MCF 10A (cell line): ENCODE measurements at regions of chr22 and their contacts with region 1.

Region 1: GRCh38 chr22:40856513-40857308 is at the starts of genes ST13 and XPNPEP3:
- DNase-seq: peak; percentile 96
- H3K4me3 Mint-ChIP-seq: peak within 1 kb of the TSS; percentile 97
- H3K27ac Mint-ChIP-seq: peak within 1 kb of the TSS; percentile 99
- H3K4me1 Mint-ChIP-seq: peaks cover 15% of the 10 kb centered on the region
- H3K27me3 Mint-ChIP-seq: no peaks in the 10 kb centered on the region
- CTCF ChIP-seq: no peak
- total RNA-seq, gene ST13: 191 and 231 TPM in 2 replicates
- total RNA-seq, gene XPNPEP3: 33.1 and 47.2 TPM in 2 replicates

Region 2: GRCh38 chr22:40818747-40819598 is 37.7 kb before region 1 on chr22 and contains the start of gene SLC25A17:
- CTCF ChIA-PET with region 1: interaction called, 5 read pairs
- POLR2A ChIA-PET with region 1: interaction called, 58 read pairs
- intact Hi-C with region 1: no loop called
- DNase-seq: peak; percentile 90
- H3K4me3 Mint-ChIP-seq: peak within 1 kb of the TSS; percentile 95
- H3K27ac Mint-ChIP-seq: peak within 1 kb of the TSS; percentile 94
- H3K4me1 Mint-ChIP-seq: peaks cover 16% of the 10 kb centered on the region
- H3K27me3 Mint-ChIP-seq: no peaks in the 10 kb centered on the region
- CTCF ChIP-seq: peak; percentile 25
- total RNA-seq, gene SLC25A17: 21.1 and 22.3 TPM in 2 replicates

Region 3: GRCh38 chr22:40867109-40867508 is 10.4 kb after region 1 on chr22:
- CTCF ChIA-PET with region 1: no interaction called
- POLR2A ChIA-PET with region 1: interaction called, 58 read pairs
- intact Hi-C with region 1: no loop called
- DNase-seq: no peak
- H3K4me3 Mint-ChIP-seq: no peak overlapping the region
- H3K27ac Mint-ChIP-seq: no peak overlapping the region
- H3K4me1 Mint-ChIP-seq: peaks cover 5% of the 10 kb centered on the region
- H3K27me3 Mint-ChIP-seq: no peaks in the 10 kb centered on the region
- CTCF ChIP-seq: no peak

Region 4: GRCh38 chr22:40889116-40889515 is 32.4 kb after region 1 on chr22:
- CTCF ChIA-PET with region 1: no interaction called
- POLR2A ChIA-PET with region 1: interaction called, 12 read pairs
- intact Hi-C with region 1: no loop called
- DNase-seq: peak; percentile 1
- H3K4me3 Mint-ChIP-seq: no peak overlapping the region
- H3K27ac Mint-ChIP-seq: peak overlapping the region; percentile 64
- H3K4me1 Mint-ChIP-seq: peaks cover 8% of the 10 kb centered on the region
- H3K27me3 Mint-ChIP-seq: no peaks in the 10 kb centered on the region
- CTCF ChIP-seq: no peak

Region 5: DNA sequence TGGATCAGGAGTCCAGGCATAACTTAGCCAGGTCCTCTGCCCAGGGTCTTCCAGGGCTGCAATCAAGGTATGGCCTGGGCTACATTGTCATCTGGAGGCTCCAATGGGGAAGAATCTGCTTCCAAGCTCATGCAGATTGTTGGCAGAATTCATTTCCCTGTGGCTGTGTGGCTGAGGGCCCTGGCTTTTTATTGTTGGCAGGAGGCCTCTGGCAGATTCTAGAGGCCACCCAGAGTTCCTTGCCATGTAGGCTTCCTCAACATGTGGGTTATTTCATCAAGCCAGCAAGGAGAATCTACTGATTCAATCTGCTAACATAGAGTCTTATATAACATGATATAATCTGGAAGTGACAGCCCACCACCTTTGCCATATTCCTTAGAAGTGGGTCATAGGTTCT is 219.2 kb after region 1 on chr22:
- CTCF ChIA-PET with region 1: no interaction called
- POLR2A ChIA-PET with region 1: no interaction called
- intact Hi-C with region 1: no loop called
- DNase-seq: no peak
- H3K4me3 Mint-ChIP-seq: no peak overlapping the region
- H3K27ac Mint-ChIP-seq: no peak overlapping the region
- H3K4me1 Mint-ChIP-seq: no peaks in the 10 kb centered on the region
- H3K27me3 Mint-ChIP-seq: no peaks in the 10 kb centered on the region
- CTCF ChIP-seq: no peak

Region 6: DNA sequence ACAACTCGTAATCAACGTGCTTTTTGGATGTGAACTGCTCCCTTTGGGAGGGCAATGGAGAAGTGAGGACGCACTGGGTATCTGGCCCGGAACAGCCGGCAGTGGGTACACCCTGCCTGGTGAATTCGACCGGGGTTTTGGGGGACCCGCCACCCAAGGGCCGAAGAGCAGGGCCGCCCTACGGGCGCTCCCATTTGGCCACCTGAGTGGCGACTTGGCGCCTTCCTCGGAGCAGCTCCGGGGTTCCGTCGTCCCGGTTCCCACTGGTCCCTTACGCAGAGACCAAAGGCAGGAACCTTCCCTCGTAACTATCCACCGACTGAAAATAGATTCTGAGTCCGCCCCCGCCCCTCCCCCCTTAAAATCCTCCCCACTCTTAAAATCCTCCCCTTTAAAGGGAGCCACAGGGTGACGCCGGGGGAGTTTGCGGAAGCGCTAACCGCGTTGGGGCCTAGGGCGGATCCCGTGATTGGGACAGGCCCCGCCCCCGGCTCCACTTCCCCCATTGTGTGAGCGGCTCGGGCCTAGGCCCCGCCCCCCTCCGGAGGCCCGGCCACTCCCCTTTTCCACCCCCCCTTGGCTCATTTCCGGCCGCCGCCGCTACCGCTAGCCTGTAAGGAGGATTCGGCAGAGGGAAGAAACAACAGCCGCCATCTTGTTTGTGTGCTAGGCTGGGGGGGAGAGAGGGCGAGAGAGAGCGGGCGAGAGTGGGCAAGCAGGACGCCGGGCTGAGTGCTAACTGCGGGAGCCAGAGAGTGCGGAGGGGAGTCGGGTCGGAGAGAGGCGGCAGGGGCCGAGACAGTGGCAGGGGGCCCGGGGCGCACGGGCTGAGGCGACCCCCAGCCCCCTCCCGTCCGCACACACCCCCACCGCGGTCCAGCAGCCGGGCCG is 234.7 kb after region 1 on chr22:
- CTCF ChIA-PET with region 1: interaction called, 5 read pairs
- POLR2A ChIA-PET with region 1: interaction called, 10 read pairs
- intact Hi-C with region 1: no loop called
- DNase-seq: peak; percentile 99
- H3K4me3 Mint-ChIP-seq: peak overlapping the region; percentile 98
- H3K27ac Mint-ChIP-seq: peak overlapping the region; percentile 99
- H3K4me1 Mint-ChIP-seq: peaks cover 28% of the 10 kb centered on the region
- H3K27me3 Mint-ChIP-seq: no peaks in the 10 kb centered on the region
- CTCF ChIP-seq: no peak